ENCODE measurements at regions of chr10 and their contacts with region 1.

Region 1: GRCh38 chr10:55631071-55631654 is 729.9 kb downstream of the ZWINT start:
- DNase-seq: peak; percentile 88
- H3K4me3 ChIP-seq: peak overlapping the region; percentile 66 to 72
- H3K27ac ChIP-seq: peak overlapping the region in 1 of 2 experiments; percentile 77; a peak in 2 of 4 replicates
- H3K4me1 ChIP-seq: peaks cover 0 to 7% of the 10 kb centered on the region in 2 experiments; a peak in 2 of 4 replicates
- H3K27me3 ChIP-seq: peaks cover 8% of the 10 kb centered on the region
- CTCF ChIP-seq: peak; percentile 66
- EP300 ChIP-seq: no peak
- RAD21 ChIP-seq: peak; percentile 83

Region 2: DNA sequence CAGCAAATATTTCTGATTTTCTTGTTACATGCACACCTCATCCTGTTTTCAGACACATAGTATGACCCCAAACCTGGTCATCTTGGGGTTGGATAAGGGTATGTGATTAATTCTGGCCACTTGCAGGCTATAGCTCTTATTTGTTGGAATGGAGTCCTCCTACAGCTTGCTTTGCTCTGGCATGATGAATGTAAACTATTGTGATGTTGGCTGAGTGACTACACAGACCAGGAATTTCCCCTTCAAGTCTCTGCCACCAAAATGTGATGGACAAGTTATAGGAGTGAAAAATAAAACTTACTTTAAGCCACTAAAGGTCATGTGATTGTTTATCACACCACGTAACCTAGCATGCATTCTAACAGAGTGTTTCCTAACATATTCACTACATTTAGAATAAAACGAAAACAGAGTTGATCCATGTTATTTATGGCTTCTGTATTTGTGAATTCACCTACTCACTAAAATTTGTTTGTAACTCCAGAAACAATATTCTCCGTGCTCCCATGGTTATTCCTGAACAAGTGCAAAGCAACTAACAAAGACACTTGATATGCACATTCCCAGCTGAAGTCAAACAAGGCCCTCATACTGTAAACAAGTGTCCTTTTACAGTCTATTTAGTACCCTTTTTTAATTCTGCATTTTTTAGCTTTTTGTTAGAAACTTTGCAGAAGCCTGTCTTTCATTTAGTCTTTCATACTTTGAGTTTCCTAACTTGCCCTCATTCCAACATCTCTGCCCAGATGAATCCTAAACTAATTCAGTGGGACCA is 230.9 kb before region 1 on chr10:
- CTCF ChIA-PET with region 1: interaction called, 17 read pairs
- POLR2A ChIA-PET with region 1: no interaction called
- DNase-seq: no peak
- H3K4me3 ChIP-seq: no peak overlapping the region
- H3K27ac ChIP-seq: peak overlapping the region; percentile 46 to 58; a peak in 3 of 4 replicates
- H3K4me1 ChIP-seq: no peaks in the 10 kb centered on the region; a peak in 1 of 4 replicates
- H3K27me3 ChIP-seq: no peaks in the 10 kb centered on the region
- CTCF ChIP-seq: no peak
- EP300 ChIP-seq: peak in 1 of 2 experiments; percentile 75; a peak in 2 of 4 replicates
- RAD21 ChIP-seq: no peak

Region 3: DNA sequence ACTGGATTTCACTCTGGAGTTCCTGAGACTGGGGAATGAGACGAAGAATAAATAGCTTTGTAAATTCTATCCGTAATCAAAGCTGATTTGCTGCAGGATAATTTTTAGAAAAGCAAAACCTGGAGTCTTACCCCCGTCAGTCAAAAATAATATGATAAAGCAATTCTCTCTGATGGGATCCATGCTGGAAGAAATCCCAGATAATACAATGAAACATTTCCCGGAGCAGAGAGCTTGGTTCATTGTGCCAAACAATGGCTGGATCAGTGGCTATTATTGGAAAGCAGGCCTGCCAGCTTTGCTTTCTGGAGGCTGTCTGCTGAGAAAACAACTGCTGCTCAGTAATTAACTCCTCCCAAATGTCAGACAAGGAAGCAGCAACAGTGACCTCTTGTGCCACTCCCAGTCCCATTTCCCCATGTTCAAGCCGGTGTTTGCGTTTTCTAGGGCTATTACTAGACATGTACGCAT is 220.7 kb before region 1 on chr10:
- CTCF ChIA-PET with region 1: interaction called, 16 read pairs
- POLR2A ChIA-PET with region 1: interaction called, 3 read pairs
- DNase-seq: peak; percentile 51
- H3K4me3 ChIP-seq: peak overlapping the region; percentile 17 to 18; a peak in 1 of 4 replicates
- H3K27ac ChIP-seq: peak overlapping the region; percentile 50 to 98
- H3K4me1 ChIP-seq: peaks cover 5 to 13% of the 10 kb centered on the region in 2 experiments; a peak in 2 of 4 replicates
- H3K27me3 ChIP-seq: no peaks in the 10 kb centered on the region
- CTCF ChIP-seq: peak; percentile 52
- EP300 ChIP-seq: peak in 1 of 2 experiments; percentile 89; a peak in 3 of 4 replicates
- RAD21 ChIP-seq: peak; percentile 91

Region 4: GRCh38 chr10:55519264-55519663 is 111.9 kb before region 1 on chr10:
- CTCF ChIA-PET with region 1: interaction called, 12 read pairs
- POLR2A ChIA-PET with region 1: interaction called, 3 read pairs
- DNase-seq: no peak
- H3K4me3 ChIP-seq: no peak overlapping the region
- H3K27ac ChIP-seq: peak overlapping the region in 1 of 2 experiments; percentile 97; a peak in 2 of 4 replicates
- H3K4me1 ChIP-seq: peaks cover 0 to 2% of the 10 kb centered on the region in 2 experiments; a peak in 2 of 4 replicates
- H3K27me3 ChIP-seq: no peaks in the 10 kb centered on the region
- CTCF ChIP-seq: no peak
- EP300 ChIP-seq: no peak
- RAD21 ChIP-seq: no peak

Region 5: DNA sequence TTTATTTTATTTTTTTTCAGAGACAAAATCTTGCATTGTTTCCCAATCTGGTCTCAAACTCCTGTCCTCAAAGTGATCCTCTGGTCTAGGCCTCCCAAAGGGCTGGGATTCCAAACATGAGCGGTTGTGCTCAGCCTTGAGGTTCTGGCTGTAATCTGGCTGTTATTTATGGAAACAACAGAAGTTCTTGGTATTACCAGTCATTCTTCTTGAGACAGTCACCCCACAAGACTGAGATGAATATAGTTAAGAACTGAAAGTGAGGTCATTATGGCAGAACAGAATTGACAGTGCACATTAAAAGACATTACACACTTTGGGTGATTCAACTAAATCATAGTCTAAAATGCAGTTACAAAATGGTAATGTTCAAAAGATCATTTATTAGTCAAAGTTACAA is 10.4 kb after region 1 on chr10:
- CTCF ChIA-PET with region 1: interaction called, 24 read pairs
- POLR2A ChIA-PET with region 1: no interaction called
- DNase-seq: no peak
- H3K4me3 ChIP-seq: no peak overlapping the region
- H3K27ac ChIP-seq: no peak overlapping the region
- H3K4me1 ChIP-seq: no peaks in the 10 kb centered on the region
- H3K27me3 ChIP-seq: no peaks in the 10 kb centered on the region
- CTCF ChIP-seq: no peak
- EP300 ChIP-seq: no peak
- RAD21 ChIP-seq: no peak